ENCODE measurements at regions of chr5 and their contacts with region 1.

Region 1: DNA sequence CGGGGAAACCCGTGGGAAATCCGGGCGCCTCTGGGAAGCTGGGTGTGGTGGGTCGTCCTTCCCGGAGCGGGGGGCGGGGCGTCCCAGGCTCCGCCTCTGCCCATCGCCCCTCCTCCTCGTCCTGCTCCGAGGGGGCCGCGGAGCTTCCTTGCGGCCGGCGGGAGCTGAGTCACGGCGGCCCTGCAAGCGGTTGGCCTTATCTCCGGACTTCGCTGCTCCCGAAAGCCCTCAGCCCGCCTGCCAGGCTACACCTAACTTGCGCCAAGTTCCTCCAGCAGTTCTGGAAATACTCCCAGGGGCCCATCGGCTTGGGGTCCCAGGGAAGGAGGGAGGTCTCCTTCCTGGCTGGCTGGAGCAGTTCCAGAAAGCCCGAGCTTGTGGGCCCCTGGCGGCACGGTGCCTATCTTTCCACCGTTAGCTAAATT is 54.1 kb upstream of the CDKN2AIPNL start:
- DNase-seq: peak; percentile 68
- ATAC-seq: peak; percentile 82
- H3K4me3 Mint-ChIP-seq: peak overlapping the region; percentile 79
- H3K27ac Mint-ChIP-seq: peak overlapping the region; percentile 66
- H3K4me1 Mint-ChIP-seq: peaks cover 43% of the 10 kb centered on the region
- H3K27me3 Mint-ChIP-seq: no peaks in the 10 kb centered on the region
- CTCF ChIP-seq: no peak

Region 2: DNA sequence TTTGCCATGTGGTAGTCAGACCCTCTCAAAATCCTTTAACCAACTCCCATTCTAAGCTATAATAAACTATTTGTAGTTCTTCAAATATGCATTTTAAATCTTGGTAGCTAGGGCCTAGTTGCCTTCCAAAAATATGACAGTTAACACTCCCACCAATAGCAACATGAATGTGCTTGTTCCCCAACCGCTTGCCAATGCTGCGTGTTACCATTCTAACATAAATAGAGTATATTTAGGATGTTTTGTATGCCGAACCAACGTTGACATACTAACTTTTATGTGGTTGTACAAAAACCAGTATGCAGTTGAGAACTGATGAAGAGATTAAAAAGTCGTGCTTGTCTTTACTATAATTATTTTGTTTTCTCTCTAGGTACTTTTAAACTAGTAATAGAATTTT is 85.5 kb before region 1 on chr5:
- CTCF ChIA-PET with region 1: no interaction called
- POLR2A ChIA-PET with region 1: no interaction called
- intact Hi-C with region 1: no loop called
- DNase-seq: no peak
- ATAC-seq: no peak
- H3K4me3 Mint-ChIP-seq: no peak overlapping the region
- H3K27ac Mint-ChIP-seq: no peak overlapping the region
- H3K4me1 Mint-ChIP-seq: peaks cover 14% of the 10 kb centered on the region
- H3K27me3 Mint-ChIP-seq: no peaks in the 10 kb centered on the region
- CTCF ChIP-seq: no peak

Region 3: GRCh38 chr5:134436523-134437339 is 29.1 kb before region 1 on chr5:
- CTCF ChIA-PET with region 1: no interaction called
- POLR2A ChIA-PET with region 1: interaction called, 11 read pairs
- intact Hi-C with region 1: no loop called
- DNase-seq: peak; percentile 64
- ATAC-seq: peak; percentile 95
- H3K4me3 Mint-ChIP-seq: peak overlapping the region; percentile 56
- H3K27ac Mint-ChIP-seq: peak overlapping the region; percentile 68
- H3K4me1 Mint-ChIP-seq: peaks cover 25% of the 10 kb centered on the region
- H3K27me3 Mint-ChIP-seq: no peaks in the 10 kb centered on the region
- CTCF ChIP-seq: no peak

Region 4: DNA sequence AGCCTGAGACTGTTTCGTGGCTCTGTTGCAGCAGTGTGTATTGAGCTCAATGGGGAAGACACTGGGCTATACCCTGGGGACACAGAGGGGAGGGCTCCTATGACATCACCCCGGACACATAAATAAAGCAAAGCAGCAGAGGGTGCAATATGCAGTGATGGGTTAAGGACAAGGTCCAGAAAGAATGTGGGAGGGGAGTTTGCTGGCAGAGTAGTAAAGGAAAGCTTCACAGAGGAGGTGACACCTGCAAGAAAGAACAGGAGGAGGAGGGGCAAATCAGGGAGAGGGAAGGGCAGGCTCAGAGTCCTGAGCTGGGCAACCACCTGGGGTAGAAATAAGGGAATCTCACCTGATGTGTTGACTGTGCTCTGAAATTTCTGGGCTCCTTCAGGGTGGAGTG is 18.9 kb before region 1 on chr5:
- CTCF ChIA-PET with region 1: interaction called, 4 read pairs
- POLR2A ChIA-PET with region 1: interaction called, 14 read pairs
- intact Hi-C with region 1: loop called (anchors 1 kb)
- DNase-seq: peak; percentile 44
- ATAC-seq: peak; percentile 84
- H3K4me3 Mint-ChIP-seq: peak overlapping the region; percentile 13
- H3K27ac Mint-ChIP-seq: peak overlapping the region; percentile 76
- H3K4me1 Mint-ChIP-seq: peaks cover 53% of the 10 kb centered on the region
- H3K27me3 Mint-ChIP-seq: no peaks in the 10 kb centered on the region
- CTCF ChIP-seq: no peak

Region 5: GRCh38 chr5:134503088-134503946 is 37.5 kb after region 1 on chr5:
- CTCF ChIA-PET with region 1: no interaction called
- POLR2A ChIA-PET with region 1: no interaction called
- intact Hi-C with region 1: loop called (anchors 5 kb)
- DNase-seq: no peak
- ATAC-seq: peak; percentile 67
- H3K4me3 Mint-ChIP-seq: no peak overlapping the region
- H3K27ac Mint-ChIP-seq: no peak overlapping the region
- H3K4me1 Mint-ChIP-seq: peaks cover 13% of the 10 kb centered on the region
- H3K27me3 Mint-ChIP-seq: no peaks in the 10 kb centered on the region
- CTCF ChIP-seq: no peak

Region 6: DNA sequence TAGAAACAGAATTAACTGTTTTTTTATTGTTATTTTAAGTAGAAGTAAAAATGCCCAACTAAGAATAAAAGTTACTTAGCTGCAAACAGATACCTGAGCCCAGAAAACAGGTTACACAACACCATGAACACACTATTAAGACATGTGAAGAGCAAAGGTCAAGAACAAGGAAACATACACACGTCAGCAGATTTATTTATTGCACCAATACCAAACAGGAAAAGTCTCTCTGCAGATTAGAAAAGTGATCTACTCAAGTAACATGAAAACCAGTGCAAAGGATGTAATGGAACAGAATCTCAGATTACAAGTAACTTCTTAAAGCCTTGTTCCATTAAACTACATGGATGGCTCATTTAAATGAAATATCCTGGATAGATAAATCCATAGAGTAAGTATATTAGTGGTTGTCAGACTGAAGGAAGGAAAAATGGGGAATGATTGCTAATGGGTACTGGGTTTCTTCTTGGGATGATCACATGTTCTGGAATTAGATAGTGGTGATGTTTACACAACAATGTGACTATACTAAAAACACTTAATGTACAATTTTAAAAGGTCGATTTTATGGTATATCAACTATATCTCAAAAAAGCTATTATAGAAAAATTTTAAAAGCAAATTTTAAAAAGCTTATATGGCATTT is 160.7 kb after region 1 on chr5:
- CTCF ChIA-PET with region 1: no interaction called
- POLR2A ChIA-PET with region 1: no interaction called
- intact Hi-C with region 1: no loop called
- DNase-seq: no peak
- ATAC-seq: no peak
- H3K4me3 Mint-ChIP-seq: no peak overlapping the region
- H3K27ac Mint-ChIP-seq: no peak overlapping the region
- H3K4me1 Mint-ChIP-seq: peaks cover 12% of the 10 kb centered on the region
- H3K27me3 Mint-ChIP-seq: no peaks in the 10 kb centered on the region
- CTCF ChIP-seq: no peak

Region 7: DNA sequence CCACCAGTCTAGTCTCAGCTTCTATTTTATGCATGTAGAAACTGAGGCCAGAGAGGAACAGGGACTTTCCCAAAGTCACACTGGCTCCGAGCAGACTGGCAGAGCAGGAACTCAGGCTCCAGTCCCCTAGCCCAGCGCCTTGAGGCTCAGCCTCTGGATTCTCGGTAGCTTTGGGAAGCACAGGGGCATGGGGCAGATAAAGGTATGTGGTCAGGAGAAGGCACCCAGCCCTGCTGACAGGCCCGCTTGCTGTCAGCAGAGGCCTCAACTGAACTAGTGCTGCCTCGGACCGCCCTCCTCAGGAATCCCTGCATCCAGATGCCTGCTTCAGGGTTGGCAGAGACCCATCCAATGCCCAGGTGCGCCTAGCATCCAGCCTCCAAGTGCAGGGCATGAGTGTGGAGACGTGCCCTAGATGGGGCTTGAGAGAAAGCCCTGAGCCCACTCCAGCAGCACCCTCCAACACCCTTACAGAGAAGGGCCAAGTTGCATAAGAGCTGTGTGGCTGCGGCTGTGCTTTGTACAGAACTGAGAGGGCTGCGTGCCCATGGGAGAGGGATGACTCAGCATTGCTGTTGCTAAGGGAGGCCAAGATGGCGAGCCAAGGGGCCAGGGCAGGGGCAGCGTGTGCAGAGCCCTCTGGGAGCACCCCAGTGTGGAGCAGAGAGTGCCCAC is 764.6 kb after region 1 on chr5:
- CTCF ChIA-PET with region 1: no interaction called
- POLR2A ChIA-PET with region 1: no interaction called
- intact Hi-C with region 1: no loop called
- DNase-seq: no peak
- ATAC-seq: no peak
- H3K4me3 Mint-ChIP-seq: no peak overlapping the region
- H3K27ac Mint-ChIP-seq: no peak overlapping the region
- H3K4me1 Mint-ChIP-seq: no peaks in the 10 kb centered on the region
- H3K27me3 Mint-ChIP-seq: peaks cover 5% of the 10 kb centered on the region
- CTCF ChIP-seq: no peak